ENCODE measurements at regions of chr12 and their contacts with region 1.

Region 1: GRCh38 chr12:53938326-53939140 is at the start of gene HOXC13:
- DNase-seq: peak; percentile 100
- H3K4me3 ChIP-seq: peak within 1 kb of the TSS; percentile 93
- H3K4me3 Mint-ChIP-seq: peak within 1 kb of the TSS; percentile 81
- H3K27ac Mint-ChIP-seq: peak within 1 kb of the TSS; percentile 79
- H3K4me1 ChIP-seq: no peaks in the 10 kb centered on the region
- H3K4me1 Mint-ChIP-seq: peaks cover 21% of the 10 kb centered on the region
- H3K27me3 ChIP-seq: no peaks in the 10 kb centered on the region; the same call in 1 of the 2 replicates
- H3K27me3 Mint-ChIP-seq: no peaks in the 10 kb centered on the region
- CTCF ChIP-seq: no peak
- total RNA-seq, gene HOXC13: 6.4 and 7.3 TPM in 2 replicates

Region 2: GRCh38 chr12:53766881-53767280 is 171.7 kb before region 1 on chr12:
- CTCF ChIA-PET with region 1: no interaction called
- POLR2A ChIA-PET with region 1: no interaction called
- intact Hi-C with region 1: loop called (anchors 5 kb)
- DNase-seq: no peak
- H3K4me3 ChIP-seq: no peak overlapping the region
- H3K4me3 Mint-ChIP-seq: no peak overlapping the region
- H3K27ac Mint-ChIP-seq: no peak overlapping the region
- H3K4me1 ChIP-seq: no peaks in the 10 kb centered on the region
- H3K4me1 Mint-ChIP-seq: no peaks in the 10 kb centered on the region
- H3K27me3 ChIP-seq: peaks cover 1% of the 10 kb centered on the region
- H3K27me3 Mint-ChIP-seq: peaks cover 21% of the 10 kb centered on the region
- CTCF ChIP-seq: no peak

Region 3: GRCh38 chr12:53791735-53792326 is 146.7 kb before region 1 on chr12:
- CTCF ChIA-PET with region 1: no interaction called
- POLR2A ChIA-PET with region 1: no interaction called
- intact Hi-C with region 1: loop called (anchors 5 kb)
- DNase-seq: peak; percentile 54 to 60
- H3K4me3 ChIP-seq: no peak overlapping the region
- H3K4me3 Mint-ChIP-seq: no peak overlapping the region
- H3K27ac Mint-ChIP-seq: no peak overlapping the region
- H3K4me1 ChIP-seq: no peaks in the 10 kb centered on the region
- H3K4me1 Mint-ChIP-seq: no peaks in the 10 kb centered on the region
- H3K27me3 ChIP-seq: no peaks in the 10 kb centered on the region
- H3K27me3 Mint-ChIP-seq: no peaks in the 10 kb centered on the region
- CTCF ChIP-seq: peak; percentile 26 to 41

Region 4: DNA sequence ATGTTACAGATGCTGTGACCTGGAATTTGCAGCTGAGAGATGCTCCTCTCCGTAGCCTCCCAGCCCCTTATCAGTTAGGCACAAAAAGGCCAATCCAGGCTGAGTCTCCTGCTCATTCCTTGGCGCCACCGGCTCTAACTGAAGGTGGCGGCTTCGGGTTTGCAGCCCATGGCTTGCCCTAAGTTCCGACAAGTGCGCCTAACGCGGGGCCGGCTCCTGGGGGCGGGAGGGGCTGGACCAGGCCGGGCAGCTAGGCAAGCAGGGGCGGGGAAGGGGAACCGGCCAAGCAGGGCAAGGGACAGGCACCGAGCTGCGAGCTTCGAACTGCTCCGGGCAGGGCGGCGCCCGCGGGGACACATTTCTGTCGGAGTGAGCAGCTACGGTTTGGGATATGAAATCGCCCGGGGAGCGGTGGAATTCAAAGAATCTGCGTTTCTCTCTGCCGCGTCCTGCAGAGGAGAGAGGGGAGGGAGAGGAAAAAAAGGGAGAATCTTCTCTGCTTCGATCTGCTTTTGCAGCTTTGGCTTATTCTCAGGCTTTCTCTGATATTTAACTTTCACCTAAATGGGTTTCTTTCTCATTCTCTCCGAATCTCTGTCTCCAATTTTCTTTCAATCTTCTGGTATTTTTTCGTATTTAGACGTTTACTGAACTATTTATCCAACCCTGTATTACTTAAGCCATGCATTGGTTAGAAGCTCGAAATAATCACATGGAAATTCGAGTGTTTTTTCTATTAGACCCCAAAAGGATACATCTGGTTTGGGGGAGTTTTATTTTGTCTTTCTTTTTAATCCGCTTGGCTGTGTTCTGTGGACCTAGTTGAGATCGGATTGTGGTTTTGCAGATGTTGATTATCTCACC is 14.6 kb after region 1 on chr12:
- CTCF ChIA-PET with region 1: interaction called, 18 read pairs
- POLR2A ChIA-PET with region 1: interaction called, 5 read pairs
- intact Hi-C with region 1: loop called (anchors 1 kb)
- DNase-seq: peak; percentile 87 to 88
- H3K4me3 ChIP-seq: peak overlapping the region; percentile 5; the same call in 1 of the 2 replicates
- H3K4me3 Mint-ChIP-seq: peak overlapping the region; percentile 71
- H3K27ac Mint-ChIP-seq: peak overlapping the region; percentile 76
- H3K4me1 ChIP-seq: peaks cover 31% of the 10 kb centered on the region
- H3K4me1 Mint-ChIP-seq: peaks cover 21% of the 10 kb centered on the region
- H3K27me3 ChIP-seq: no peaks in the 10 kb centered on the region
- H3K27me3 Mint-ChIP-seq: no peaks in the 10 kb centered on the region
- CTCF ChIP-seq: no peak

Region 5: GRCh38 chr12:53974084-53975063 is 35.8 kb after region 1 on chr12 and contains the start of gene HOTAIR:
- CTCF ChIA-PET with region 1: interaction called, 7 read pairs
- POLR2A ChIA-PET with region 1: interaction called, 15 read pairs
- intact Hi-C with region 1: loop called (anchors 2 kb)
- DNase-seq: peak in 1 of 2 experiments; percentile 59
- H3K4me3 ChIP-seq: peak within 1 kb of the TSS; percentile 66
- H3K4me3 Mint-ChIP-seq: peak within 1 kb of the TSS; percentile 83
- H3K27ac Mint-ChIP-seq: peak within 1 kb of the TSS; percentile 73
- H3K4me1 ChIP-seq: peaks cover 20% of the 10 kb centered on the region
- H3K4me1 Mint-ChIP-seq: peaks cover 8% of the 10 kb centered on the region
- H3K27me3 ChIP-seq: no peaks in the 10 kb centered on the region
- H3K27me3 Mint-ChIP-seq: no peaks in the 10 kb centered on the region
- CTCF ChIP-seq: no peak
- total RNA-seq, gene HOTAIR: 1.6 and 1.9 TPM in 2 replicates

Region 6: GRCh38 chr12:54036620-54037359 is 98.3 kb after region 1 on chr12:
- CTCF ChIA-PET with region 1: no interaction called
- POLR2A ChIA-PET with region 1: no interaction called
- intact Hi-C with region 1: no loop called
- DNase-seq: no peak
- H3K4me3 ChIP-seq: no peak overlapping the region
- H3K4me3 Mint-ChIP-seq: no peak overlapping the region
- H3K27ac Mint-ChIP-seq: no peak overlapping the region
- H3K4me1 ChIP-seq: peaks cover 29% of the 10 kb centered on the region
- H3K4me1 Mint-ChIP-seq: peaks cover 12% of the 10 kb centered on the region
- H3K27me3 ChIP-seq: no peaks in the 10 kb centered on the region
- H3K27me3 Mint-ChIP-seq: no peaks in the 10 kb centered on the region
- CTCF ChIP-seq: no peak

Measured in Caco-2 (cell line).